Mammary epithelial cell (primary cell): ENCODE measurements at regions of chr20 and their contacts with region 1.

Region 1: DNA sequence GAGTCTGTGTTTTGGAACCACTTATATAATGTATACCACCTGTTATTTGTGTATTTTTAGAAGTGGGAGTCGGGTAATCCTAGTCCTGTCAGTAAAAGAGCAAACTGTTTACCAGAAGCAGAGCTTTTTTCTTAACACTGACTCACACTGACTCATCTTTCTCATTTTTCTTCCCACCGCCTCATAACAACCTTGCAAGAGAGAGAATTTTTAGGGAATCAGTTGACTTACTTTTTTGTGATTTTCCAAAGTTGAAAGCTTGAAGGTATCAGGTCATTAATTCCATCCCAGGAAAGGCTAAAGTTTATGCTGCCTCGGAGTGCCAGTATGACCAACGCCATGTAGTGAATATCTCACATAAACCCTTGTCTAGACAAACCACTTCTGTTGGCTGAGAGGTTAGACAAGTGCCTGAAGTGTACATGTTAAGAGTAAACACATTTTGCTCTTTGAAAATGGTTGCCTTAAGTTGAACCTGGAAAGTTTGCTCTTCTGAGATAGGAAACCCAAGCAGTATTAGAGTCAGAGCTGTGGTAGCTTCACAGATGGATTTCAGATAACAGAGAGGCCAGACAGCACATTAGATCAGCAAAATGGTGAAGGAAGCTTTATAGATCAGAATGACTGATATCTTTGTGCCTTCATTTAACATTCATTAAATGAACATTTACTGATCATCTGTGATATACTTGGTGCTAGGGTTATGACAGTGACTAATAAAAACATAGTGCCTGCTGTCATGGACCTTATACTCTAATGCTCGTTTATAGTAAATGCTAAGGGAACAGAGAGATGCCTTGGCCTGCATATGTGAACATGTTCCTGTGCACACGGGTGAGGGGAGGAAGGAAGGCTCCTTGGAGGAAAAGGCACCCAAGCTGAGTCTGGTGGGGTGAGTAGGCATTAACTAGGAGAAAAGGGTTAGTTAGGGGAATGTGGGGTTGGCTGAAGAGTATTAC is 29.1 kb upstream of the PKIG start:
- DNase-seq: peak; percentile 55
- H3K4me3 ChIP-seq: no peak overlapping the region
- H3K27ac ChIP-seq: no peak overlapping the region
- H3K4me1 ChIP-seq: peaks cover 9% of the 10 kb centered on the region
- H3K27me3 ChIP-seq: no peaks in the 10 kb centered on the region
- CTCF ChIP-seq: no peak

Region 2: DNA sequence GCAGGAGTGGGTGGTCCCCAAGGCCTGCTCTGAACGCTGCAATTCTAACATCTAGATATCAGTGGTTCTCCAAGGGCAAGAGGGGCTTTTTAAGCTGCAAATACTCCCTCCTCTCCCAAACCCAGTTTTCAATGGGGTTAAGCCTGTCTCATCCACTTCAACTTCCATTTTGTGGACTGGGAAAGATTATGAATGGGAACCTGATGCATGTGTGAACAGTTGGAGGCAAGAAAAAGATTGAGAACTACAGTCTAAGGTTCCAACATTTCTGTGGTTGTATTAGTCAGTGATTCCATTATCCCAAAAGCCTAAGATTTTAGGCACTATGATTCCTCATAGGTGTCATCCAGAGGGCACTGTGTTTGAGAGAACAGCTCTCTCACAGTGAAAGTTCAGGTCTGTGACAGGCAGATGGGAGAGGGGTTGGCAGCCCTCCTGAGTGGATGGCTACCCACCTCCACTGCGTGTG is 144.1 kb before region 1 on chr20:
- CTCF ChIA-PET with region 1: no interaction called
- dilution Hi-C with region 1: no loop called
- in situ Hi-C with region 1: no loop called
- intact Hi-C with region 1: no loop called
- DNase-seq: peak; percentile 74
- H3K4me3 ChIP-seq: no peak overlapping the region
- H3K27ac ChIP-seq: peak overlapping the region; percentile 24
- H3K4me1 ChIP-seq: peaks cover 26% of the 10 kb centered on the region
- H3K27me3 ChIP-seq: no peaks in the 10 kb centered on the region
- CTCF ChIP-seq: no peak

Region 3: DNA sequence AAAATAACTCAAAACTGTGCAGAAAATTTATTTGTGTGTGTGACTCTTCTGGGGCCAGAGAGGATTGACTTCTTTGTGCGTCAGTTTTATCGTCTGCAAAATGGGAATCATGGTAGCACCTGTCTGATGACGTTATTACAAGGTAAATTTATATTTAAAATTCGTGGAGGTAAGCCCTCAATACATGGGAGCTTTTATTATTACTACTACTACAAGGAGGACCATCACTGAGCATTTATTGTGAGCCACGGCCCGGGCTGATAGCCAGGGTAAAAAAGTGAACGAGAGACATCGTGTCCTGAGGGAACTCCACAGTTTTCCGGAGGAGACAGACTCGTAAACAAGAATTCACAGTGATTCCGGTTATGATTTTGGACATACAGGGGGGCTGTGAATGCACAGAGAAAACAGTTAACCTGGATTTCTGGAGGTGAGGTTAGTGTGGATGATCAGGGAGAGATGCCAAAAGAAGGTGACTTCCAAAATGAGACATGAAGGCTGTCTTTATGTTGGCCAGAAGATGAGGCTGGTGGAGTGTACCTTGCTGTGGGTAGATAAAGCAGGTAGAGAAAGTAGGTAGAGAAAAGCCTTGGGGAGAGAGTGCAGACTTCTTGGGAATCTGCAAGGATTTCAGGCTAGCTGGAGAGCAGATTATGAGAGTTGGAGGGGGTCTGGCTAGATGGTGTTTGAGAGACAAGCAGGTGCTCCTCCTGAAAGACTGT is 20.8 kb before region 1 on chr20:
- CTCF ChIA-PET with region 1: no interaction called
- dilution Hi-C with region 1: no loop called
- in situ Hi-C with region 1: no loop called
- intact Hi-C with region 1: loop called (anchors 2 kb)
- DNase-seq: no peak
- H3K4me3 ChIP-seq: peak overlapping the region; percentile 60 to 82 (median 69)
- H3K27ac ChIP-seq: peak overlapping the region; percentile 50
- H3K4me1 ChIP-seq: peaks cover 9% of the 10 kb centered on the region
- H3K27me3 ChIP-seq: no peaks in the 10 kb centered on the region
- CTCF ChIP-seq: no peak

Region 4: GRCh38 chr20:44572541-44573500 is 19.6 kb after region 1 on chr20:
- CTCF ChIA-PET with region 1: no interaction called
- dilution Hi-C with region 1: no loop called
- in situ Hi-C with region 1: no loop called
- intact Hi-C with region 1: no loop called
- DNase-seq: peak; percentile 85
- H3K4me3 ChIP-seq: no peak overlapping the region
- H3K27ac ChIP-seq: peak overlapping the region; percentile 80
- H3K4me1 ChIP-seq: peaks cover 24% of the 10 kb centered on the region
- H3K27me3 ChIP-seq: no peaks in the 10 kb centered on the region
- CTCF ChIP-seq: no peak